CD8-positive, alpha-beta T cell (primary cell): ENCODE measurements at regions of chr3 and their contacts with region 1.

Region 1: GRCh38 chr3:42804106-42804830 is at the start of gene HIGD1A:
- DNase-seq: peak; percentile 82 to 97 (median 92)
- ATAC-seq: peak; percentile 98
- H3K4me3 ChIP-seq: peak within 1 kb of the TSS; percentile 84 to 90
- H3K4me3 Mint-ChIP-seq: peak within 1 kb of the TSS; percentile 98
- H3K27ac ChIP-seq: peak within 1 kb of the TSS; percentile 68 to 87
- H3K27ac Mint-ChIP-seq: peak within 1 kb of the TSS; percentile 91
- H3K4me1 ChIP-seq: peaks cover 26% of the 10 kb centered on the region
- H3K4me1 Mint-ChIP-seq: peaks cover 49% of the 10 kb centered on the region
- H3K27me3 ChIP-seq: no peaks in the 10 kb centered on the region
- H3K27me3 Mint-ChIP-seq: peaks cover 4% of the 10 kb centered on the region
- CTCF ChIP-seq: no peak
- total RNA-seq, gene HIGD1A: 10.9 to 11.8 TPM

Region 2: GRCh38 chr3:41961750-41962679 is 842.3 kb before region 1 on chr3 and contains the start of gene ULK4:
- CTCF ChIA-PET with region 1: no interaction called
- POLR2A ChIA-PET with region 1: no interaction called
- intact Hi-C with region 1: loop called in 1 of 2 experiments (anchors 10 kb)
- DNase-seq: peak; percentile 89 to 99 (median 95)
- ATAC-seq: peak; percentile 84
- H3K4me3 ChIP-seq: peak within 1 kb of the TSS; percentile 84 to 99
- H3K4me3 Mint-ChIP-seq: peak within 1 kb of the TSS; percentile 100
- H3K27ac ChIP-seq: peak within 1 kb of the TSS; percentile 85 to 96
- H3K27ac Mint-ChIP-seq: peak within 1 kb of the TSS; percentile 99
- H3K4me1 ChIP-seq: peaks cover 15% of the 10 kb centered on the region
- H3K4me1 Mint-ChIP-seq: peaks cover 24% of the 10 kb centered on the region
- H3K27me3 ChIP-seq: no peaks in the 10 kb centered on the region
- H3K27me3 Mint-ChIP-seq: no peaks in the 10 kb centered on the region
- CTCF ChIP-seq: no peak
- total RNA-seq, gene ULK4: 11.9 to 15.1 TPM

Region 3: DNA sequence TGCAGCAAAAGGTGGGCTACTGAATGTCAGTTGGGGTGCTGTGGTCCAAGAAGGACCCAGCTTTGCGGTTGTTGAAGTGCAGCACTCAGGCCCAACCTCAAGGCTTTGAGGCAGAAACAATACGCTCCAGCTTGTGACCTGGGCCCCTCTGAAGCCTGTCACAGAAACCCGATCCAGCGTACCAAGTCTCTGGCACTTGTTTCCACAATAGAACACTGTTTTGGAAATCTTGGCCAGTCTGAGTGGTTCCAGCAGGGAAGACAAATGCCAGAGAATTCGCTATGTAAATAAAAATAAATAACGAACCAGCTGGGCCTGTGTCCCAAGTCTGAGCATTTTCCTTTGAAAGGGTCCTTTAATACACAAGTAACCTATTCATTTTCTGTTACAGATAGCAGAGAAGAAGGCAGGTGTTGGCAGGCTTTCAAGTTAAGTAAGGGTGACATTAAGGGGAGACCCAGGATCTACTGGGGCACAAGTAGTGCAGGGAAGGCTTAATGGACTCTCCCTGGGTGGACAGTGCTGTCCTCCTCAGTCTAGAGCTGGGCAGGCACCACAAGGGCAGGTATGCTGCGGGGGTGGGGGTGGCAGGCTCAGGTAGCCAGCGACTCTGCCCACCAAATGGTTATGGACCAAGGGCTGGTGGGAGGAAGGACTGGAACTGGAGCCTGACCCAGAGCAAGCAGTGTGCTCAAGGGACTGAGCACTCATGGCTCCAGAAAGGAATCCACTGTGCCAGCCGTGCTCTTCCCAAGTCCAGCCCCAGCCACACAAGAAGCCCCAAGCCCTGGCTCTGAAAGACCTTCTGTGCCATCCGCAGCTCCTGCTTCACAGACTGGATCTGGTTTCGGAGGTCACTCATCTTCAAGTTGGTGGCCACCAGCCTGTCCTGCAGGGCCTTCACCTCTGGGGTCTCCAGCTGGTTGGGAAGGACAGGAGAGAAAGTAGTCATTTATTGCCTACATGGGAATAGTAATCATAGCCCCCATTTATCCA is 57.5 kb before region 1 on chr3:
- CTCF ChIA-PET with region 1: no interaction called
- POLR2A ChIA-PET with region 1: no interaction called
- intact Hi-C with region 1: no loop called
- DNase-seq: no peak
- ATAC-seq: no peak
- H3K4me3 ChIP-seq: no peak overlapping the region
- H3K4me3 Mint-ChIP-seq: no peak overlapping the region
- H3K27ac ChIP-seq: no peak overlapping the region
- H3K27ac Mint-ChIP-seq: no peak overlapping the region
- H3K4me1 ChIP-seq: peaks cover 12% of the 10 kb centered on the region
- H3K4me1 Mint-ChIP-seq: peaks cover 18% of the 10 kb centered on the region
- H3K27me3 ChIP-seq: no peaks in the 10 kb centered on the region
- H3K27me3 Mint-ChIP-seq: no peaks in the 10 kb centered on the region
- CTCF ChIP-seq: no peak

Region 4: GRCh38 chr3:42772670-42773408 is 31.4 kb before region 1 on chr3 and contains the start of gene CCDC13:
- CTCF ChIA-PET with region 1: no interaction called
- POLR2A ChIA-PET with region 1: no interaction called
- intact Hi-C with region 1: loop called in 1 of 2 experiments (anchors 1 kb)
- DNase-seq: peak; percentile 76 to 92 (median 90)
- ATAC-seq: peak; percentile 89
- H3K4me3 ChIP-seq: peak within 1 kb of the TSS; percentile 58 to 62
- H3K4me3 Mint-ChIP-seq: peak within 1 kb of the TSS; percentile 91
- H3K27ac ChIP-seq: peak within 1 kb of the TSS in 1 of 2 experiments; percentile 38
- H3K27ac Mint-ChIP-seq: peak within 1 kb of the TSS; percentile 80
- H3K4me1 ChIP-seq: peaks cover 9% of the 10 kb centered on the region
- H3K4me1 Mint-ChIP-seq: peaks cover 12% of the 10 kb centered on the region
- H3K27me3 ChIP-seq: no peaks in the 10 kb centered on the region
- H3K27me3 Mint-ChIP-seq: no peaks in the 10 kb centered on the region
- CTCF ChIP-seq: no peak
- total RNA-seq, gene CCDC13: 0.44 TPM in 1 of 2 experiments, not detected in the other

Region 5: DNA sequence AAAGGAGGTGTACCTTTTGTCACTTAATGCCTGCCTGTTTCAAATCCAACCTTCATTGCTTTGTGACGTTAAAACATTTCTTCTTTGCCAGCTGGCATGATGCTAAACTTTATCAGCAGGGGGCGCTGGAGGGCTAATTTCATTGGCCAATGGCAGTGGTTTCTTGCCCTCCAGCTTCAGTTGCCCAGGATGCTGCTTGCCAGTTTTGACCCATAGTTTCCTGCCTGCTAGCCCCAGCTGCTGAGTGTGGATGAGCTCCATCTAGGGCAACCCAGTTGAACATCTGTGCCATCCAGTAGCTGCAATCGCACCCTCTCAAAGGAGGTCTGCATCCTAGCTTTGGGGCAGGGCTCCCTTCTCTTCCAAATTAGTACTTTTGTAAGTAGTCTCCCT is 27.0 kb after region 1 on chr3:
- CTCF ChIA-PET with region 1: interaction called, 5 read pairs
- POLR2A ChIA-PET with region 1: no interaction called
- intact Hi-C with region 1: loop called in 1 of 2 experiments (anchors 1 kb)
- DNase-seq: peak; percentile 43 to 80 (median 76)
- ATAC-seq: peak; percentile 69
- H3K4me3 ChIP-seq: no peak overlapping the region
- H3K4me3 Mint-ChIP-seq: no peak overlapping the region
- H3K27ac ChIP-seq: no peak overlapping the region
- H3K27ac Mint-ChIP-seq: no peak overlapping the region
- H3K4me1 ChIP-seq: peaks cover 4% of the 10 kb centered on the region
- H3K4me1 Mint-ChIP-seq: peaks cover 2% of the 10 kb centered on the region
- H3K27me3 ChIP-seq: no peaks in the 10 kb centered on the region
- H3K27me3 Mint-ChIP-seq: peaks cover 23% of the 10 kb centered on the region
- CTCF ChIP-seq: peak; percentile 76

Region 6: GRCh38 chr3:43105596-43106292 is 301.5 kb after region 1 on chr3 and contains the start of gene POMGNT2:
- CTCF ChIA-PET with region 1: no interaction called
- POLR2A ChIA-PET with region 1: no interaction called
- intact Hi-C with region 1: loop called in 1 of 2 experiments (anchors 1 kb)
- DNase-seq: peak; percentile 75 to 94 (median 87)
- ATAC-seq: peak; percentile 93
- H3K4me3 ChIP-seq: peak within 1 kb of the TSS; percentile 67 to 75
- H3K4me3 Mint-ChIP-seq: peak within 1 kb of the TSS; percentile 87
- H3K27ac ChIP-seq: peak within 1 kb of the TSS in 1 of 2 experiments; percentile 50
- H3K27ac Mint-ChIP-seq: peak within 1 kb of the TSS; percentile 74
- H3K4me1 ChIP-seq: peaks cover 15% of the 10 kb centered on the region
- H3K4me1 Mint-ChIP-seq: peaks cover 30% of the 10 kb centered on the region
- H3K27me3 ChIP-seq: no peaks in the 10 kb centered on the region
- H3K27me3 Mint-ChIP-seq: no peaks in the 10 kb centered on the region
- CTCF ChIP-seq: no peak
- total RNA-seq, gene POMGNT2: 9.8 to 11.0 TPM